ENCODE measurements at regions of chr10 and their contacts with region 1.

Region 1: DNA sequence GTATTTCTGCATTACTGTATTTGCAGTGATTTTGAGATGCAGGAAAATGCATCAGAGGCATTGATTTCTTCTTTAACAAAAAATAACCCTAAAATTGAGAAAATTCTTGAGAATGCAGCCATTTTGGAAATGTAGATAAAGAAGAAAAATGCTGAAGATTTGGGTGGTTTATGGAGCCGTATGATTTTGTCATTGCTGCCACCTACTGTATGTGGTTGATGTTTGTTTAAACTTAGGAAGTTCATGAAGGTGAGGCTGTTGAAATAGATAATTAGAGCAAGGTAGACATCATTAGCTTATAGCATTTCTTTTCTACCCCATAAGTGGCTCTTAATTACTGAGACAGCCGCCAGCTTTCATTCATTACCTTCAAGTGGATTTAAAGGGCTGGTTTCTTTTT is 92.1 kb upstream of the SAMD8 start:
- DNase-seq: peak; percentile 88
- ATAC-seq: peak; percentile 20; the same call in 1 of the 2 replicates
- H3K4me3 ChIP-seq: no peak overlapping the region
- H3K27ac ChIP-seq: no peak overlapping the region
- H3K4me1 ChIP-seq: peaks cover 14% of the 10 kb centered on the region
- H3K27me3 ChIP-seq: no peaks in the 10 kb centered on the region
- CTCF ChIP-seq: peak; percentile 98

Region 2: GRCh38 chr10:74419958-74420375 is 599.4 kb before region 1 on chr10:
- CTCF ChIA-PET with region 1: interaction called, 3 read pairs
- POLR2A ChIA-PET with region 1: no interaction called
- intact Hi-C with region 1: loop called (anchors 1 kb)
- DNase-seq: peak; percentile 92
- ATAC-seq: peak; percentile 70
- H3K4me3 ChIP-seq: no peak overlapping the region
- H3K27ac ChIP-seq: no peak overlapping the region
- H3K4me1 ChIP-seq: no peaks in the 10 kb centered on the region
- H3K27me3 ChIP-seq: no peaks in the 10 kb centered on the region
- CTCF ChIP-seq: peak; percentile 99

Region 3: GRCh38 chr10:74548676-74549075 is 470.7 kb before region 1 on chr10:
- CTCF ChIA-PET with region 1: no interaction called
- POLR2A ChIA-PET with region 1: no interaction called
- intact Hi-C with region 1: loop called (anchors 1 kb)
- DNase-seq: peak; percentile 100
- ATAC-seq: peak; percentile 97
- H3K4me3 ChIP-seq: peak overlapping the region; percentile 4; the same call in 1 of the 2 replicates
- H3K27ac ChIP-seq: peak overlapping the region; percentile 66
- H3K4me1 ChIP-seq: peaks cover 21% of the 10 kb centered on the region
- H3K27me3 ChIP-seq: no peaks in the 10 kb centered on the region
- CTCF ChIP-seq: no peak

Region 4: DNA sequence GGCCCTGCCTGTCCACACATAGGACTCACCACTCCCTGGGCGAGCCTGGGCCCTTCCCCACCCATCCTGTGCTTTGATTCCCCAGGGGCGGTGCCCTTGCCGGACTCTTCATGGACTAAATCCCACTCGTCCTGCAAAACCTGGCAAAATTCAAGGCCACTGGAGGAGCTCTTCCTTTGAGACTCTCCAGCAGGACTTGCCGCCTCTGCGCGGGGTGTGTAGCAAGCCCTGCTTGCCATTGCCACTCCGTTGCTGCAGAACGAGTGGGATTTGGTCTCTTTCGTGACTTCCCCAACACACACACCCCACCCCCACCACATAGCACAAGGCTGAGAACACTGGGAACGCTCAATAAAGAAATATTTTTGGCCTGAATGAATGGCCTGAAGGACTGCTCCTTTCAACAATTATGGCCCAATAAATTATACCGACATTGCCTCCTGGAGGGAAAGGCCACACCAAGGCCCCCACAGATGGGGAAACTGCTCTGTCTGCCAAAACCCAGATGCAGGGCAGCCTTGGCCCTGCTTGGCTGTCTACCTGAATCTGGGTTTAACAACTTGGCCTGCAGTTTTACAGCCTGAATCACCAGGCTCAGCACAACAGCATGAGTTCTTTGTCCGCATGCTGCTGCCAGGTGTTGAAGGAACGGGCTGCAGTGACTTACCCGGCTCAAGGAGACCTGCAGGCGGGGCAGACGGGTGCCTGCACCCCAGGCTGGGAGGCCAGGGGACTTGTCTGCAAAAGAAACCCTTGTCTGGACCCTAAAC is 265.7 kb before region 1 on chr10:
- CTCF ChIA-PET with region 1: interaction called, 3 read pairs
- POLR2A ChIA-PET with region 1: no interaction called
- intact Hi-C with region 1: loop called (anchors 1 kb)
- DNase-seq: peak; percentile 100
- ATAC-seq: peak; percentile 86
- H3K4me3 ChIP-seq: peak overlapping the region; percentile 30
- H3K27ac ChIP-seq: peak overlapping the region; percentile 82
- H3K4me1 ChIP-seq: peaks cover 25% of the 10 kb centered on the region
- H3K27me3 ChIP-seq: no peaks in the 10 kb centered on the region
- CTCF ChIP-seq: peak; percentile 51

Region 5: GRCh38 chr10:74888962-74889663 is 130.3 kb before region 1 on chr10:
- CTCF ChIA-PET with region 1: interaction called, 5 read pairs
- POLR2A ChIA-PET with region 1: interaction called, 6 read pairs
- intact Hi-C with region 1: loop called (anchors 2 kb)
- DNase-seq: peak; percentile 85
- ATAC-seq: peak; percentile 77
- H3K4me3 ChIP-seq: no peak overlapping the region
- H3K27ac ChIP-seq: no peak overlapping the region
- H3K4me1 ChIP-seq: no peaks in the 10 kb centered on the region
- H3K27me3 ChIP-seq: no peaks in the 10 kb centered on the region
- CTCF ChIP-seq: peak; percentile 94

Region 6: DNA sequence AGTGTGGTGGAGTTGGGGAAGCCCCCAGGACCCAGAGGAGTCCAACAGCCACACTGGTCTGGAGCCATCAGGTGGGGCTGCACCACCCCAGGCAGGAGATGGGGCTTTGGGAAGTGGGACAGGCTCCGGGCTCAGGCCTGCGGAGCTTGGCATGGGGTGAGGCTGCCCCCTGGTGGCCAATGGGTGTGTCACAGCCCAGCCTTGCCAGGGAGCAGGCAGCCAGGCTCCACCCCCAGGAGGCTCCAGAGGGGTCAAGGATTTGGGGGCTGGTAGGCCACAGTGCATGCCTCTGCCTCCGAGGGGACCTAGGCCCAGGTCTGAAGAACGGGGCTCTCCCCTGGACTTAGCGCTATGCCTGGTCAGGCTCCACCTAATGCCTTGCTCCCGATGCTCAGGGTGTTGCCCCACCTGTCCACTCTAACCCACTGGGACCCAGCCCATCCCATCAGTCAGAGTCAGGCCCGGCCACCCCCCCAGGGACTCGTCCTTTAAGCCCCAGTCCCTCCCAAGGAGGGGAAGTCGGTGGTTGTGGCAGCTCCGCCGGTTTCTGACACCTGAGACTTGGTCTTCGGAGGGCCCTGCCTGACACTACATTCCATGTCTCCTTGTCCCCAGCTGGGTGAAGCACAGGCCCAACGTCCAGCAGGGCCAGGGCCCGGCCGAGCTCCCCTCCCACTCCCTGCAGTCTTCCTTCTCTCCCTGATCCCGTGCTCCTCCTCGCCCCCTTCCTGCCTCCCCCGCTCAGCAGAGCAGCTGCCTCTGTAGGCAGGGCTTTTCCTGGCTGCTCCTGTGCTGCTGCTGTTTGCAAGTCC is 80.8 kb after region 1 on chr10:
- CTCF ChIA-PET with region 1: interaction called, 4 read pairs
- POLR2A ChIA-PET with region 1: no interaction called
- intact Hi-C with region 1: loop called (anchors 1 kb)
- DNase-seq: peak; percentile 99
- ATAC-seq: peak; percentile 90
- H3K4me3 ChIP-seq: no peak overlapping the region
- H3K27ac ChIP-seq: no peak overlapping the region
- H3K4me1 ChIP-seq: peaks cover 7% of the 10 kb centered on the region; the same call in 1 of the 2 replicates
- H3K27me3 ChIP-seq: no peaks in the 10 kb centered on the region
- CTCF ChIP-seq: peak; percentile 100

Region 7: GRCh38 chr10:75127471-75127870 is 108.1 kb after region 1 on chr10:
- CTCF ChIA-PET with region 1: no interaction called
- POLR2A ChIA-PET with region 1: no interaction called
- intact Hi-C with region 1: no loop called
- DNase-seq: no peak
- ATAC-seq: 0 out of 2 replicates have a peak, but pooled peaks have one; percentile 18
- H3K4me3 ChIP-seq: no peak overlapping the region
- H3K27ac ChIP-seq: no peak overlapping the region
- H3K4me1 ChIP-seq: peaks cover 7% of the 10 kb centered on the region
- H3K27me3 ChIP-seq: no peaks in the 10 kb centered on the region
- CTCF ChIP-seq: no peak